BJ (cell line): ENCODE measurements at regions of chr12 and their contacts with region 1.

Region 1: GRCh38 chr12:124541322-124541721 is 26.1 kb downstream of the NCOR2 start:
- DNase-seq: no peak
- H3K4me3 ChIP-seq: no peak overlapping the region
- H3K27me3 ChIP-seq: no peaks in the 10 kb centered on the region
- CTCF ChIP-seq: no peak

Region 2: DNA sequence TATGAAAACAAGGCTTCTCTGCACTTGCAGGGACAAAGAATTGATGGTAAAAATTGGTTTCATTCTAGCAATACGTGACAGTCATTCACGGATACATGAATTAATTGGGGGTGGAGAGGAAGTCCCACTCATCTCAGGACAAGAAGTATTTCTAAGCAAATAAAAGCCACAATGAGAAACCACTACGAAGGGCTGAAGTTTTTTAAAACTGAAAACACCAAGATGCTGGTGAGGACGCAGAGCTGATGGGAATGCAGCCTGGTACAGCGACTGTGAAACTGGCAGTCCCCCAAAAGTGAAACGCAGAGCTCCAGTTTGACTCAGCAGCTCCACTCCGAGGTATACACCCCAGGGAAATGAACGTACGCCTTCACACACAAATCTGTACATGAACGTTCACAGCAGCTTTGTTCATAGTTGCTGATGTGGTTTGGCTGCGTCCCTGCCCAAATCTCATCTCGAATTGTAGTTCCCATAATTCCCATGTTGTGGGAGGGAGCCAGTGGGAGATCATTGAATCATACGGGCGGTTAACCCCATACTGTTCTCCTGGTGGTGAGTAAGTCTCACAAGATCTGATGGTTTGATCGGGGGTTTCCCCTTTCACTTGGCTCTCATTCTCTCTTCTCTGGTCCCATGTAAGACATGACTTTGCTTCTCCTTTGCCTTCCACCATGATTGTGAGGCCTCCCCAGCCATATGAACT is 233.3 kb after region 1 on chr12:
- CTCF ChIA-PET with region 1: interaction called, 4 read pairs
- POLR2A ChIA-PET with region 1: interaction called, 19 read pairs
- DNase-seq: peak; percentile 60
- H3K4me3 ChIP-seq: no peak overlapping the region
- H3K27me3 ChIP-seq: no peaks in the 10 kb centered on the region; the same call in 1 of the 2 replicates
- CTCF ChIP-seq: no peak; the same call in 1 of the 2 replicates